ENCODE measurements at regions of chr1 and their contacts with region 1.

Region 1: GRCh38 chr1:151739590-151740375 is 18.5 kb downstream of the RIIAD1 start:
- DNase-seq: no peak
- ATAC-seq: peak; percentile 82

Region 2: DNA sequence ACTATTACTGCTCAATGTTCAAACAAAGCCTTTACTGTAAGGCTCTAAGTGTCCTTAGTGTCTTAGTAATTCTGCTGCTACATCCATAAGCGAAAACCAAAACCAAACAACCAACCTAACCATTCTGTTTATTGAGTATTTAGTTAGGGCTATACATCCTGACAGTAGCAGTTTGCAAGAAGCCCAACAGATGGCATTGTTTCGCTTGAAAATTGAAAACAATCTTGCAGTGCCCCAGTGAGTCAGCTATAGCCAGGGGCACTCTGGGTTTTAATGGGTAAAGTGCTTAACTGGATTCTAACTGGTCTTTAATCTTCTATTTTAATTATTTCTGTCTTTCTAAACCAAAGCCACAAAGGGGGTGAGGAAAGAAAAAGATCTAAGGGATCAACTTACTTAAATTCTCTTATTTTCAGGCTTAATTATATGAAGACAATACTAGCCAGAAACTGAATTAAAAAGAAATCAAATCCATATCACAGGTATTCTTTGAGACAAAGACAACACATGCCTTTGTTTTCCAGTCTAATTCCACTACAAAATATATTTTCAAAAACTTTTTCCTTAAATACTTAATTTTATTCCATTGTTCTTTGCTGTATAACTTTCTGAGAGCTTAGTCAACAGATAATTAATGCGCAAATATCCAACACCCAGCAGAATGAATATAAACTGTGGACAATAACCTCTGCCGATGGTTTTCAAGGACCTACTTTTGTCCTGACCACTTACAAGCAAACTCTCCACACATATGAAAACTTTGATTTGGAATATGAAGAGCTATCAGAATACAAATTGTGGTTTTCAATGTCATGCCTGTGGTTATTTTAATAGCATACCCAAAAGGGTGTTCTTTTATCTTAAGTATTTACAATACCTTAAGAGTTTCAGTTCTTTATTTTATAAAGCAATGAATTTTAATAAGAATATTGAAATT is 295.7 kb before region 1 on chr1:
- intact Hi-C with region 1: loop called in 1 of 2 experiments (anchors 10 kb)
- DNase-seq: peak; percentile 44 to 71
- ATAC-seq: peak; percentile 97

Region 3: DNA sequence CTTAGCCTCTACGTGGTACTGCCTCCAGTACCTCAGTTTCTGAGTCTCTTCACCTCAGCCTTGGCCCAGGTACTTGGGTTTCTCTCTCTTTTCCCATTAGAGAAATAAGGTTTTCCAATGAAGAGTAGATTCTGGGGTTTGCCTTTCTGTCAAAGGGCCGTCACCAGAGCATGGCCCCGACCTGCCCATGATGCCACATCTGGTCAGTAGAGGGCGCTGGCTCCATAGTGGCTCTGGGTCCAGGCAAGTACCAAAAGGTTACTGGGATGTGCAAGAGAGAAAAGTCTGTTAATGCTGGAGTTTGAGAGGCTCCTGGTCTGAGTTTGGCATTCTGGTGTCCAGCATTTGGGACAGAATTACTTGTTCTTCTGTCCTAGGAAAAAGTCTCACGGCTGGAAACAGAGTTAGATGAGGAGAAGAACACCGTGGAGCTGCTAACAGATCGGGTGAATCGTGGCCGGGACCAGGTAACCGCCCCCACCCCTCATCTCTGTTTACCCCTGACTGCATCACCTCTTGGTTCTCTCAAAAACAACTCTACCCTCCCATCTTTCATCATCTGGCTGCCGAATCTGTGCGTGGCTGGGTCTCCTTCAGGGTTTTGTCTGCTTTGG is 205.0 kb before region 1 on chr1:
- intact Hi-C with region 1: loop called in 1 of 2 experiments (anchors 5 kb)
- DNase-seq: peak; percentile 65 to 88
- ATAC-seq: peak; percentile 40

Region 4: GRCh38 chr1:151594143-151594625 is 145.6 kb before region 1 on chr1:
- intact Hi-C with region 1: loop called in 1 of 2 experiments (anchors 10 kb)
- DNase-seq: peak; percentile 73 to 94
- ATAC-seq: peak; percentile 98

Region 5: GRCh38 chr1:151799179-151799949 is 59.6 kb after region 1 on chr1:
- intact Hi-C with region 1: no loop called
- DNase-seq: no peak
- ATAC-seq: no peak

Region 6: DNA sequence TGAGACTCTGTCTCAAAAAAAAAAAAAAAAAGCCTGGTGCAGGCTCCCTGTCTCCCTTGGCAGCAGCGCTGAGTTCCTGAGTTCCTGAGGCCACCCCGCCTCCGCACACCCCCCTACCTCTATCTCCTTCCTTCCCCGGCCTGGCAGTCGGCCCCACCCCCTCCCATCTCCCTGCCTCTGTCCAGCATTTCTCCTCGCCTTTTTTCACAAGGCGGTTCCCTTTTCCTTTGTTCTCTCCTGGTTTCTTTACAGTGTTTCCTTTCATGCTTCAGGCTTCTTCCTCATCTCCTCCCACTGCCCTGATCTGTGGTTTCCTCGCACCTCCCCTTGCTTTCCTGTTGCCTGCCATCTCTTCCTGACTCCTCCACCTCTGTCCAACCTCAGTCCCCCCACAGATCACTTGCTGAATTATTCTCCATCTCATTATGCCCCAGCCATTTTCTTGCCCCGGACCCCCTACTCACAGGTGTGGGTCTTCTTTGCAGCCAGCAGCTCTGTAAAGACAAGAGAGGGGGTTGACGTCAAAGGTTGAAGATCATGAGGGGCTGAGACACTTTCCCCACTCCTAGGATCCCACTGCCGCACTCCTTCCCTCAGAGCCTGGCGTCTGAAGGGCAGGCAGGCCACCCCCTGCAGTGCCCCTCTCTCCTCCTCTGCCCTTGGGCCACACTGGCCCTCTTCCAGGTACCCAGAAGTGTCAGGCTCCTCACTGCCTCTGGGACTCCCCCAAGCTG is 89.3 kb after region 1 on chr1:
- intact Hi-C with region 1: no loop called
- DNase-seq: peak; percentile 34 to 51
- ATAC-seq: no peak